ENCODE measurements at regions of chr1 and their contacts with region 1.

Region 1: GRCh38 chr1:42681741-42682483 is at the start of gene YBX1:
- DNase-seq: peak; percentile 98
- ATAC-seq: peak; percentile 99
- total RNA-seq, gene YBX1: 439 TPM

Region 2: GRCh38 chr1:42756956-42757891 is 75.3 kb after region 1 on chr1:
- intact Hi-C with region 1: loop called (anchors 5 kb)
- DNase-seq: no peak
- ATAC-seq: peak; percentile 61

Measured in sciatic nerve (tissue), 2 donors.